ENCODE measurements at regions of chr6 and their contacts with region 1.

Region 1: DNA sequence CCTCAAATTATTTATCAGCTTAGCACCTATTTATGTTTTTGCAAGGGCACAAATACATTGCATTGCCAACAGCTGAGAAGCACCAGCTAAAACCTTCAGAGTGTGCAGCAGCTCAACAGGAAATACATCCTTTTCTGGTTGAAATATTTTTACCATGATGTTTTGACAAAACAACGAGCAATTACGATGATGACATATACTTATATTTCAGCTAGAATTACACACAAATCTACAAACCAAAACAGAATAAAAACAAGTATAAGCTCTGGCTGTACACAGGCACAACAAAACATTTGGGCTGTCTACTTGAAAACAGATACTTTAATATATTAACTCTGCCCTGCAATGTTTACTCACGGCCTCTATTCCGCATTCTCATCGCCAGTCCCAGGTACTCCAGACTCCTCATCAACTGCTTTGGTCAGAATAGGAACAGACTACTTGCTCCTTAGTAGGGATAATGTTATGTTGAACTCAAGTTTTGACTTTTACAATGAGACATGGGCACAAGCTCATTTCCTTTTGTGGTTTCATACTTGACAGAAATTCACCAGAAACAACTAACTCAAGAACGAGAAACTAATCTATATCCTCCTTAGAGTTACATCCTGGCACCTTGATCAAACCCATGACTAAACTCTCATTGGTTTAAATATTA is 377.6 kb downstream of the ESR1 start:
- DNase-seq: peak; percentile 24
- H3K4me3 Mint-ChIP-seq: peak overlapping the region; percentile 79
- H3K27ac Mint-ChIP-seq: peak overlapping the region; percentile 94
- H3K4me1 Mint-ChIP-seq: peaks cover 69% of the 10 kb centered on the region
- H3K27me3 Mint-ChIP-seq: no peaks in the 10 kb centered on the region

Region 2: GRCh38 chr6:151702851-151703611 is 482.0 kb before region 1 on chr6:
- CTCF ChIA-PET with region 1: no interaction called
- intact Hi-C with region 1: loop called (anchors 2 kb)
- DNase-seq: no peak
- H3K4me3 Mint-ChIP-seq: no peak overlapping the region
- H3K27ac Mint-ChIP-seq: peak overlapping the region; percentile 12
- H3K4me1 Mint-ChIP-seq: peaks cover 45% of the 10 kb centered on the region
- H3K27me3 Mint-ChIP-seq: peaks cover 11% of the 10 kb centered on the region

Region 3: DNA sequence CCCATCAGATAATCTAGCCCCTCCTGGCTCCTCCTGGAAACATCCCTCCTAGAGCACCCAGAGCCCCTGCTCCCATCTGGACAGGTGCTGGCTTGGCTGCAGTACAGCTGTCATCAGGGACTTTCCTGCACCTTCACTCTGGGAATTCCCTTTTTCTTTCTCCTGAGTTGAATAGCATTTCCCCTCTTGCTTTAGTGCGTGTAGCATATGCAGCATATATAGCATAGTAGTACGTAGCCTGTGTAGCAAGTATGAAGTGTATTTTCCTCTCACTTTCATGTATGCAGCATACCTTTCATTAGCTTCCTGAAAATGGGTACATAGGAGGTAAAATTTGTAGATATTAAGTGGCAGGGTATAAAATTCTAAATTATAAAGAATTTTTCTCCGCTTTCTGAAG is 24.7 kb before region 1 on chr6:
- CTCF ChIA-PET with region 1: interaction called, 5 read pairs
- intact Hi-C with region 1: loop called (anchors 1 kb)
- DNase-seq: peak; percentile 64
- H3K4me3 Mint-ChIP-seq: no peak overlapping the region
- H3K27ac Mint-ChIP-seq: peak overlapping the region; percentile 85
- H3K4me1 Mint-ChIP-seq: peaks cover 28% of the 10 kb centered on the region
- H3K27me3 Mint-ChIP-seq: no peaks in the 10 kb centered on the region

Region 4: DNA sequence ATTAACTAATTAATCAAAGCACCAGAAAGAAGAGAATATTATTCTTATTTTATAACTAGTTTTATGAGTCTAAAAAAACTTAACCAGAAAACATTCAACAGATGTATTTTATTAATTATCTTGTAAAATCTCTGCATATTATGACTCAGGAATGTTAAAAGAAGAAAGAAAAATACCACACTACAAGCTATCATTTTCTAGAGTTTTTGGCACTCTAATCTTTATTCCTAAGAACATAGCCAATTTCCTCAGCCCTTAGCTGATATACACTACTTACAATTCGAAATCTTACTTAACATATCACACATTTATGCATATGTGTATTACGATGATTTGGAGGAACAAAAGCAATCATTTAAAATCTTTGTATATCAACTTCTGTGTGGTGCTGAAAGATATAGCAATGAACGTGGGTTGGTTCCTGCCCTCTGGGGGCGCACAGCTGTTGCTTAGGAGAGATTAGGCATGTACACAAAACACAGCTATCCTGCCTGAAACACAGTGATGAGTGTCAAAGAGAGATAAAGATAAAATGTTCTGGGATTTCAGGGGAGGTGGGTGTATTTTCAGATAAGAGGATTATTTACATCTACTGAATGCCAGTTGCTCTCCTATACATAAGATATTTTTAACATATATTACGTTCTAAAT is 47.6 kb after region 1 on chr6:
- CTCF ChIA-PET with region 1: interaction called, 7 read pairs
- intact Hi-C with region 1: loop called (anchors 1 kb)
- DNase-seq: peak; percentile 54
- H3K4me3 Mint-ChIP-seq: peak overlapping the region; percentile 73
- H3K27ac Mint-ChIP-seq: no peak overlapping the region
- H3K4me1 Mint-ChIP-seq: peaks cover 26% of the 10 kb centered on the region
- H3K27me3 Mint-ChIP-seq: no peaks in the 10 kb centered on the region

Region 5: DNA sequence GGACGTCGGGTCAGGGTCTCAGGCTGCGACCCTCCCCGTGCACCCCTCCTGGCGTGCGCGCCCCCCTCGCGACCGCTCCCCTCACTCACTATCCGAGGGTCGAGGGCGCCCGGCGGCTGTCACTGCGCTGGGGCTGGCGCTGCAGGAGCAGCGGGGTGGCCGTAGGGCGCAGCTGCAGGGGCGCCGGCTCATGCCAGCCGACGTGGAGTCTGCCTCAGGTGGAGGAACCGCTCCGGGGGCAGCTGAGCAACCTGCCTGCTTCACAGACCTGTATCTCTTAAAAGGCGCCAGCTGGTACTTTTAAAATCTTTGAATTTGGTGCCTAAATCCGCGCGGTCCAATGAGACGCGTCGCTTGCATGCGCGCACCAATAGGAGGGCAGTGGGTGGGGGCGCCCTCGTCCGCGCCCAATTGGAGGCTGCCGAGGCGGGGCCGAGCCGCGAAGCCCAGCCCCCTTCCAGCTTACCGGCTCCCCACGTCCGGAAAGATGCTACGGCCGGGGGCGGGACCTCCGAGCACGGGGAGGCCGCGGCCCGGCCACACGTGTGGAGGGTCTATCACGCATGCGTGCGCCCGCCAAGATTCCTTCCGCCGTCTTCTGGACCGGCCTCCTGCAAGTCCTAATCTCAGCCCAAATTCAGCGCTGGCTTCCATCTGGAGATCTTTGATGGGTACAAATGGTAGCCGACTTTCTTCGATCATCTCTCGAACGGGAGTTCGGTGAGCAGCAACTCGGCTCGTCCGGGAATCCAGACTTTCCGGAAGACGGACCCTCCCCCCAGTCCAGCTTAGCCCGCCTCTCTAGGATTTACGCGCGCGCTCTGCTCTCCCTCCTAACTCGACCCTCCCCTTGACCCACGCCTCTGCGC is 798.0 kb after region 1 on chr6 and contains the start of gene FBXO5:
- CTCF ChIA-PET with region 1: no interaction called
- intact Hi-C with region 1: loop called (anchors 2 kb)
- DNase-seq: peak; percentile 97
- H3K4me3 Mint-ChIP-seq: peak within 1 kb of the TSS; percentile 99
- H3K27ac Mint-ChIP-seq: peak within 1 kb of the TSS; percentile 100
- H3K4me1 Mint-ChIP-seq: peaks cover 44% of the 10 kb centered on the region
- H3K27me3 Mint-ChIP-seq: no peaks in the 10 kb centered on the region
- total RNA-seq, gene FBXO5: 61.4 to 62.3 TPM